ENCODE measurements at regions of chr11 and their contacts with region 1.

Region 1: DNA sequence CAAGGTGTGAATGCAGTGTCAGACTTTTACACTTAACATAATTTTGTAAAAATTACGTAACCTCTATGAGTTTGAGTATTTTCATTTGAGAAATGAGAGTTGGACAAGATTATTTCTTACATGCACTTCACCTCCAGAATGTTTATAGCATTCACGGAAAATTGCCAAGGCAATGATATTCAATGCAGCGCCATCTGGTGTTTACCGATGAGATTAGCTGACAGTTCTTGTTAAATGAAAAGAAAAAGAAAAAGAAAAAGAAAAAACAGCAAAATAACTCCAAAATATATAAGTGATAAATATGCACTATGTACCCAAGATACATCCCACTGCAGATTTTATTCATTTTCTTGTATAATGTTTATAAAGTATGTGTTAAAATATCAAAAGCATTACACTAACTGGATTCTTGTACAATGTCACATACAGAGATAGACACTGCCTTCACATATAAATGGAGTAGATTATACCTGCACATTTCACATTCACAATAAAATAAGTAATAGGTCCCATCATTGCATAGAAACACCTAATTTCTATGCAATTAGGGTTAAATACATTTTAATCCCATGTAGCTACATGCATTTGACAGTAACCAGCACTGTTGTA is 976.3 kb upstream of the FAT3 start:
- DNase-seq: peak; percentile 50 to 59
- H3K4me3 ChIP-seq: no peak overlapping the region
- H3K4me3 Mint-ChIP-seq: no peak overlapping the region
- H3K27ac Mint-ChIP-seq: no peak overlapping the region
- H3K4me1 ChIP-seq: no peaks in the 10 kb centered on the region
- H3K4me1 Mint-ChIP-seq: peaks cover 6% of the 10 kb centered on the region
- H3K27me3 ChIP-seq: no peaks in the 10 kb centered on the region
- H3K27me3 Mint-ChIP-seq: no peaks in the 10 kb centered on the region
- CTCF ChIP-seq: peak; percentile 81 to 87

Region 2: GRCh38 chr11:90288212-90288821 is 960.0 kb before region 1 on chr11:
- CTCF ChIA-PET with region 1: no interaction called
- POLR2A ChIA-PET with region 1: no interaction called
- intact Hi-C with region 1: loop called (anchors 5 kb)
- DNase-seq: peak in 1 of 2 experiments; percentile 46
- H3K4me3 ChIP-seq: no peak overlapping the region
- H3K4me3 Mint-ChIP-seq: no peak overlapping the region
- H3K27ac Mint-ChIP-seq: no peak overlapping the region
- H3K4me1 ChIP-seq: peaks cover 17% of the 10 kb centered on the region
- H3K4me1 Mint-ChIP-seq: no peaks in the 10 kb centered on the region
- H3K27me3 ChIP-seq: no peaks in the 10 kb centered on the region; the same call in 1 of the 2 replicates
- H3K27me3 Mint-ChIP-seq: no peaks in the 10 kb centered on the region
- CTCF ChIP-seq: peak; percentile 86 to 90

Region 3: GRCh38 chr11:90822996-90823395 is 425.3 kb before region 1 on chr11:
- CTCF ChIA-PET with region 1: no interaction called
- POLR2A ChIA-PET with region 1: no interaction called
- intact Hi-C with region 1: loop called (anchors 10 kb)
- DNase-seq: no peak
- H3K4me3 ChIP-seq: no peak overlapping the region
- H3K4me3 Mint-ChIP-seq: peak overlapping the region; percentile 9
- H3K27ac Mint-ChIP-seq: peak overlapping the region; percentile 3
- H3K4me1 ChIP-seq: peaks cover 17% of the 10 kb centered on the region
- H3K4me1 Mint-ChIP-seq: peaks cover 19% of the 10 kb centered on the region
- H3K27me3 ChIP-seq: no peaks in the 10 kb centered on the region
- H3K27me3 Mint-ChIP-seq: no peaks in the 10 kb centered on the region
- CTCF ChIP-seq: no peak

Region 4: DNA sequence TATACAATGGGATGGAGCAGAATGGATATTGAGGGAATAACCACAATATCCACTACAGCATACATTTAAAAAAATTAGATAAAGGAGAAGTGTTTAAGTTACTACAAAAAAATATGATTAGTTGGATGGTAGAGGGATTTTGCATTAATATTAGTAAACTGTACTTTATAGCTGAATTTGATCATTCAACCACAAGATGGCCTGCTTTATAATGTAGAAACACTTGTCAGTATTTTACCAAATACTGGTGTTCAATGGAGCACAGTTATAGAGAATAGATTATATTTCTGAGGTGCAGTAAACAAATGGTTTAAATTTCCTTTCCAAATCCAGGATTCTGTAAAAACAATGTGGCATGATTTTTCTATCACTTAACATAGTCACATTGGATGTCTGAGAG is 206.7 kb before region 1 on chr11:
- CTCF ChIA-PET with region 1: no interaction called
- POLR2A ChIA-PET with region 1: no interaction called
- intact Hi-C with region 1: loop called (anchors 1 kb)
- DNase-seq: no peak
- H3K4me3 ChIP-seq: no peak overlapping the region
- H3K4me3 Mint-ChIP-seq: no peak overlapping the region
- H3K27ac Mint-ChIP-seq: no peak overlapping the region
- H3K4me1 ChIP-seq: no peaks in the 10 kb centered on the region
- H3K4me1 Mint-ChIP-seq: no peaks in the 10 kb centered on the region
- H3K27me3 ChIP-seq: no peaks in the 10 kb centered on the region
- H3K27me3 Mint-ChIP-seq: no peaks in the 10 kb centered on the region
- CTCF ChIP-seq: peak in 1 of 2 experiments; percentile 24

Region 5: GRCh38 chr11:91133361-91133760 is 114.9 kb before region 1 on chr11:
- CTCF ChIA-PET with region 1: no interaction called
- POLR2A ChIA-PET with region 1: no interaction called
- intact Hi-C with region 1: loop called (anchors 5 kb)
- DNase-seq: no peak
- H3K4me3 ChIP-seq: no peak overlapping the region
- H3K4me3 Mint-ChIP-seq: no peak overlapping the region
- H3K27ac Mint-ChIP-seq: no peak overlapping the region
- H3K4me1 ChIP-seq: peaks cover 20% of the 10 kb centered on the region
- H3K4me1 Mint-ChIP-seq: no peaks in the 10 kb centered on the region
- H3K27me3 ChIP-seq: no peaks in the 10 kb centered on the region
- H3K27me3 Mint-ChIP-seq: no peaks in the 10 kb centered on the region
- CTCF ChIP-seq: no peak

Region 6: DNA sequence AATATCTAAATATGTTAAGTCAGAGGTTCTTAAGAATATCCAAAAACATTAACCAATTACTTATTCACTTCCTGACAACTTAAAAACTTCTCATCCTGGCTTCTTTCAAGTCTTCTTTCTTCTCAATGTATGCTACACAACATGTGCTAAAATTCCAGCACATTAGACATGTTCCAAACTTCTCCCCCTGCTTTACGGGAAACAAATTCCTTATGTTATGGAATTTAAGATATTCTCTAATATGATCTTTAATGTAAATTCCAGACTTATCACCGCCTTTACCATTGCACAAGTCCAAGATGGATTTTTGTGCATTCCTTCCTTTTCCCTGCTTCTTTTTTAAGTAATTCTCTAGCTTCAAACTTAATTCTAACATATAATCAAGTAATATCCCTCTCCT is 61.0 kb before region 1 on chr11:
- CTCF ChIA-PET with region 1: no interaction called
- POLR2A ChIA-PET with region 1: no interaction called
- intact Hi-C with region 1: no loop called
- DNase-seq: no peak
- H3K4me3 ChIP-seq: no peak overlapping the region
- H3K4me3 Mint-ChIP-seq: no peak overlapping the region
- H3K27ac Mint-ChIP-seq: no peak overlapping the region
- H3K4me1 ChIP-seq: 0 out of 2 replicates have a peak, but pooled peaks cover 5% of the 10 kb centered on the region
- H3K4me1 Mint-ChIP-seq: peaks cover 6% of the 10 kb centered on the region
- H3K27me3 ChIP-seq: no peaks in the 10 kb centered on the region
- H3K27me3 Mint-ChIP-seq: no peaks in the 10 kb centered on the region
- CTCF ChIP-seq: no peak

Measured in Caco-2 (cell line).